CD14-positive monocyte (primary cell): ENCODE measurements at regions of chr7 and their contacts with region 1.

Region 1: DNA sequence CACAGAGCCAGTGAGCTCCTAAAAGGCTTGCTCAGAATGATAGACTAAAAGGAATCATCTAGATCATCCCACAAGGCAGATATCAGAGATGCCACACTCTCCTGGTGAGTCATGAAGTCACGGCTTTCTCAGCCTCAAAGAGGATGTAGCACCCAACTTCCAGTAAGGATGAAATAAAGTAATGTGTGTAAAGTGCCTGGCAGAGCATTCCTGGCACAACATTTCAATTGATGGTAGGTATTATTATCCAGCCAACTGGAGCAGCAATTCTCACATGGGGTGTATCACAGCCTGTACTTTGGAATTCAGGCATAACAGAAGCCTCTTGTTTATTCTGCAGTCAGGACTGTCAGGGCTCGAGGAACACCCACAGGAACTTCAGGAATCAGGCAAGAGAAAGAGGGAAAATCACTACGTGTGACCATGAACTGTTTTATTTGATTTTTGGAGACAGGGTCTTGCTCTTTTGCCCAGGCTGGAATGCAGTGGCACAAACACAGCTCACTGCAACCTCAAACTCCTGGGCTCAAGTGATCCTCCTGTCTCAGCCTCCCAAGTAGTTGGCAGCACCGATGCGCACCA is 5.3 kb upstream of the NAT16 start:
- DNase-seq: peak in 1 of 3 donors; percentile 49
- H3K4me3 ChIP-seq: no peak overlapping the region
- H3K4me3 Mint-ChIP-seq: peak overlapping the region in 1 of 2 donors; percentile 44
- H3K27ac ChIP-seq: no peak overlapping the region
- H3K27ac Mint-ChIP-seq: no peak overlapping the region
- H3K4me1 ChIP-seq: peaks cover 12 to 14% of the 10 kb centered on the region in 2 donors
- H3K4me1 Mint-ChIP-seq: peaks cover 17% of the 10 kb centered on the region
- H3K27me3 ChIP-seq: peaks cover 11 to 27% of the 10 kb centered on the region in 2 donors
- H3K27me3 Mint-ChIP-seq: peaks cover 31 to 47% (median 33%) of the 10 kb centered on the region in 3 donors
- CTCF ChIP-seq: no peak

Region 2: GRCh38 chr7:100599911-100600729 is 585.2 kb before region 1 on chr7:
- intact Hi-C with region 1: no loop called
- DNase-seq: no peak
- H3K4me3 ChIP-seq: no peak overlapping the region
- H3K4me3 Mint-ChIP-seq: no peak overlapping the region
- H3K27ac ChIP-seq: no peak overlapping the region
- H3K27ac Mint-ChIP-seq: no peak overlapping the region
- H3K4me1 ChIP-seq: peaks cover 14 to 16% of the 10 kb centered on the region in 2 donors
- H3K4me1 Mint-ChIP-seq: peaks cover 11% of the 10 kb centered on the region
- H3K27me3 ChIP-seq: peaks cover 0 to 10% of the 10 kb centered on the region in 2 donors
- H3K27me3 Mint-ChIP-seq: peaks cover 10 to 20% (median 17%) of the 10 kb centered on the region in 3 donors
- CTCF ChIP-seq: no peak

Region 3: DNA sequence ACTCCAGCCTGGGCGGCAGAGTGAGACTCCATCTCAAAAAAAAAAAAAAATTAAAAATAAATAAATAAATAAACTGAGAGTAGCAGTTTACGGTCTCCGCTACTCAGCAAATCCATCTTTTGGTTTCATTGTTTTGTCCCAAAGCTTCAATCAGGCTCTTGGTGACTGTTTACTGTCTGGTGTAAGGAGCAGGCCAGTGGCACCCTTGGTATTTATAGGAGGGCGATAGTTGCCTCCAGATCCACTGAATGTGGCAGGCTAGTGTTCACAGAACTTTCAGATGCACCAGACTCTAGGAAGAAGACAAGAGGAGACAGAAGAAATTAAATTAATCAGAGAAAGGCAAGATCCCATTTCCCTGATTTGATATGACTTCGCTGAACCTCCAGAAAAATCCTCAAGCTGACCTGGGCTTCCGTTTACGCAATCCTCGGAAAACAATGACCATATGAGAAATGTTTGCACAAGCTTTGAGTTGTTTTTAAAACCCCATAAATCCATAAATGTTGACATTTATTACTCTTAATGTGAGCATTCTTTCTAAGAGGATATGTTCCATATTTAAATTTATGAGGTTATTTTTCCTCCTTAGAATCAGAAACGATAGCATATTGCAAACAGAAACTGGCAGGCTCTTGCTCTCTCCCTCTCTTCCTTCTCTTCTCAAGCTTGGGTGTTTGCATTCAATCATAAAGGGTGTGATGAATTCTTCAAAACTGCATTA is 243.1 kb before region 1 on chr7:
- intact Hi-C with region 1: no loop called
- DNase-seq: no peak
- H3K4me3 ChIP-seq: no peak overlapping the region
- H3K4me3 Mint-ChIP-seq: peak overlapping the region in 1 of 2 donors; percentile 7
- H3K27ac ChIP-seq: no peak overlapping the region
- H3K27ac Mint-ChIP-seq: no peak overlapping the region
- H3K4me1 ChIP-seq: no peaks in the 10 kb centered on the region
- H3K4me1 Mint-ChIP-seq: no peaks in the 10 kb centered on the region
- H3K27me3 ChIP-seq: no peaks in the 10 kb centered on the region
- H3K27me3 Mint-ChIP-seq: peaks cover 12 to 19% (median 13%) of the 10 kb centered on the region in 3 donors
- CTCF ChIP-seq: no peak

Region 4: GRCh38 chr7:101077303-101078089 is 107.9 kb before region 1 on chr7:
- intact Hi-C with region 1: loop called in 1 of 2 experiments (anchors 5 kb)
- DNase-seq: peak; percentile 65 to 83 (median 77)
- H3K4me3 ChIP-seq: no peak overlapping the region
- H3K4me3 Mint-ChIP-seq: peak overlapping the region in 1 of 2 donors; percentile 6
- H3K27ac ChIP-seq: no peak overlapping the region
- H3K27ac Mint-ChIP-seq: peak overlapping the region in 2 of 7 donors; percentile 43 to 67
- H3K4me1 ChIP-seq: peaks cover 0 to 3% of the 10 kb centered on the region in 2 donors
- H3K4me1 Mint-ChIP-seq: peaks cover 12% of the 10 kb centered on the region
- H3K27me3 ChIP-seq: peaks cover 0 to 2% of the 10 kb centered on the region in 2 donors
- H3K27me3 Mint-ChIP-seq: peaks cover 14 to 19% (median 19%) of the 10 kb centered on the region in 3 donors
- CTCF ChIP-seq: peak; percentile 91

Region 5: DNA sequence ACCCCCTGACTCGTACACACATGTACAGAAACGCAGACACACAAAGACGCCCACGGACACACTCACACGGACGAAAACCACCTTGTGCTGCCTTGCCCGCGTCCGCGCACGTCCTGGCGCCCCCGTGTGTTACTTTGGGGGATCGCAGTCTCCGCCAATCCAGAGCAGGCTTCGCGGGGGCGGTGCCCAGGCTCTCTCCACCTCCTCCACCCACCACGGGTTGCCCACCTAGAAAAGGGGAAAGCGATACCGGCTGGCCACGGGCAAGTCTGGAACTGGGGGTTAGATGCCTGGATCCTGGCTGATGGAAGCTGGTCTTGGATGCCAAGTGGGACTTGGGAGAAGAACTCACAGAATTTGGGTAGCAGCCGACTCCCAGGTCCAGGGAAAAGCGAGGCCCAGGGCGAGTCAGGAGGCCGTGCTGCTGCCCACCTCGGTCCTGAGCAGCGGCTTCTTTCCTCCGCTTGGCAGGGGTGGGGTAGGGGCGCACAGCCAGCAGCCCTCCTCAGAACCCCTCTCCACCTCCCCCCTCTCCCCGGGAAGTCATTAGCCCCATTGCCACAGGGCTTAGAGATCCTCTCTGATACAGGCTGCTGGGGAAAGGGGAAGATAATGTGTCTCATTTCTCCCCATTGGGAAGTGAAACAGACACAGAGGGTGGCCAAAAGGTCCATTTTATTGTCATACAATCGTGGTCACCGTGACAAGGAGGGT is 15.4 kb before region 1 on chr7:
- intact Hi-C with region 1: loop called in 1 of 2 experiments (anchors 2 kb)
- DNase-seq: peak; percentile 49 to 75 (median 57)
- H3K4me3 ChIP-seq: no peak overlapping the region
- H3K4me3 Mint-ChIP-seq: peak overlapping the region in 1 of 2 donors; percentile 88
- H3K27ac ChIP-seq: no peak overlapping the region
- H3K27ac Mint-ChIP-seq: peak overlapping the region in 4 of 7 donors; percentile 40 to 89 (median 71)
- H3K4me1 ChIP-seq: peaks cover 50 to 59% of the 10 kb centered on the region in 2 donors
- H3K4me1 Mint-ChIP-seq: peaks cover 68% of the 10 kb centered on the region
- H3K27me3 ChIP-seq: peaks cover 74 to 97% of the 10 kb centered on the region in 2 donors
- H3K27me3 Mint-ChIP-seq: peaks cover 98 to 100% (median 98%) of the 10 kb centered on the region in 3 donors
- CTCF ChIP-seq: peak; percentile 89

Region 6: DNA sequence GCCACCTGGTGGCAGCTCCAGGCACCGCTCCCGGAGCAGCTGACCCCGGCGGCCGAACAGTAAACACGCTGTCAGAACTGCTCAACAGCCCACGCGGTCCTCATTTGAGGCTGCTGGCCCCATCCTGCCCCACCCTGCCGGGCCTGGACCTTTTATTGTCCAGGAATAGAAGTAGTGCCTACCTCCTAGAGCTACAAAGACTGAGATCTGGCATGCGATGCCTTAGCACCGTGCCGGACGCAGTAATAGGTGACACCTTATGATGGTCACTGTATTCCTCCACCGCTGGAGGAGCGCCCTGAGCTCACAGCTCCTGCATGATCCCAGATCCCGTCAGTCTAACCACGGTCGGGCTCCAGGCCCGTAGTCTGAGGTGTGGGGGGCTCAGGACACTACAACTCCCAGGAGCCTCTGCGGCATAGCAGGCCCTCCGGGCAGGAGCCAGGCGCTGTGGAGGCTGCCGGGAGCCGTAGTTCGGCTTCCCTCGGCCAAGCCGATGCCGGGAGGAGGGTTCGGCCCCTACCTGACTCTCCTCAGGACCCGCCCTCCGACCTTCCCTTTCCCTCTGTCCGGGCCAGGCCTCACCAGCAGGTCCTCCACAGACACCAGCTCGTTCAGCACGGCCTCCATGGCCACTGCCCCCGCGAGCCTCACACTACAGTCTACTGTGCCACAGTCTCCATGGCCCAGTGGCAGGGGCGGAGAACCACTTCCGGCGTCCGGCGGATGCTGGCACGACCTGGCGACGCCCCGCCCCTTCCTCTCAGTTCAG is 59.2 kb after region 1 on chr7 and contains the start of gene FIS1:
- intact Hi-C with region 1: no loop called
- DNase-seq: peak; percentile 87 to 93 (median 88)
- H3K4me3 ChIP-seq: peak within 1 kb of the TSS; percentile 68 to 97 (median 78)
- H3K4me3 Mint-ChIP-seq: peak within 1 kb of the TSS; percentile 96 to 97
- H3K27ac ChIP-seq: peak within 1 kb of the TSS; percentile 67 to 96
- H3K27ac Mint-ChIP-seq: peak within 1 kb of the TSS; percentile 90 to 98 (median 96)
- H3K4me1 ChIP-seq: peaks cover 37 to 48% of the 10 kb centered on the region in 2 donors
- H3K4me1 Mint-ChIP-seq: peaks cover 39% of the 10 kb centered on the region
- H3K27me3 ChIP-seq: no peaks in the 10 kb centered on the region
- H3K27me3 Mint-ChIP-seq: peaks cover 0 to 2% (median 0%) of the 10 kb centered on the region in 3 donors
- CTCF ChIP-seq: peak; percentile 98
- polyA plus RNA-seq, gene FIS1: 152 to 198 (median 195) TPM

Region 7: GRCh38 chr7:101265622-101266516 is 80.5 kb after region 1 on chr7:
- intact Hi-C with region 1: no loop called
- DNase-seq: no peak
- H3K4me3 ChIP-seq: no peak overlapping the region
- H3K4me3 Mint-ChIP-seq: no peak overlapping the region
- H3K27ac ChIP-seq: no peak overlapping the region
- H3K27ac Mint-ChIP-seq: no peak overlapping the region
- H3K4me1 ChIP-seq: no peaks in the 10 kb centered on the region
- H3K4me1 Mint-ChIP-seq: peaks cover 1% of the 10 kb centered on the region
- H3K27me3 ChIP-seq: no peaks in the 10 kb centered on the region
- H3K27me3 Mint-ChIP-seq: peaks cover 7 to 24% (median 21%) of the 10 kb centered on the region in 3 donors
- CTCF ChIP-seq: no peak